ENCODE measurements at regions of chr4 and their contacts with region 1.

Region 1: GRCh38 chr4:146175541-146176453 is at the start of gene LSM6:
- DNase-seq: peak; percentile 91
- ATAC-seq: peak; percentile 94
- H3K4me3 Mint-ChIP-seq: peak within 1 kb of the TSS; percentile 82
- H3K27ac Mint-ChIP-seq: peak within 1 kb of the TSS; percentile 85
- H3K4me1 Mint-ChIP-seq: peaks cover 49% of the 10 kb centered on the region
- H3K27me3 Mint-ChIP-seq: no peaks in the 10 kb centered on the region
- total RNA-seq, gene LSM6: 64.9 to 66.9 TPM

Region 2: GRCh38 chr4:145732895-145733880 is 442.6 kb before region 1 on chr4:
- CTCF ChIA-PET with region 1: no interaction called
- POLR2A ChIA-PET with region 1: no interaction called
- intact Hi-C with region 1: loop called in 1 of 2 experiments (anchors 5 kb)
- DNase-seq: peak; percentile 92
- ATAC-seq: peak; percentile 92
- H3K4me3 Mint-ChIP-seq: peak overlapping the region; percentile 65
- H3K27ac Mint-ChIP-seq: peak overlapping the region; percentile 56
- H3K4me1 Mint-ChIP-seq: peaks cover 23% of the 10 kb centered on the region
- H3K27me3 Mint-ChIP-seq: no peaks in the 10 kb centered on the region

Region 3: DNA sequence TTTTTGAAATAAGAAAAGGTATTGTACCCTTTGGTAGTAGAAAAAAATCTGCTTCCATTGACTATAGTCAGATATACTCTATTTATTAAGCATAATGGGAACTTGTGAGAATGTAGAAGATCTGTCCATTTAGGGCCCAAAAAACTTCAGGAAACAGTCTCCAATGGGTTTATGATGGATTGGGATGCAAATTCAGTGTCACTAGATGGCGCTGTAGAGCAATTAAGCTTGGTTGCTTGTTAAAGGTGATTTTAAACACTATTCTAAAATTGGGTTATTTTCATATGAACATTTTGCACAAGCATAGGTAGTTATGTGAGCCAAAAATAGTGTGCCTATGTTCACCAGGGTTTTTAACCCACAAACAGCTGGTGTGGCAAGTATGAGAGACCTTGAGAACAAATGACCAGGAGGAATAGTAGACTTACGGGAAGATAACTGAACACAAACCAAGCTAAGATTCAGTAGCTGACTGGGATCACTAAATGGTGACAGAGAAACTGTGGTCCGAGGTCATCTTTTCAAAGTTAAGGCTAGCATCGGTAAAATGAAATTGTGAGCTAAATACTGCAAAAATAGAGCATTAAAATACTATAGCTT is 80.6 kb before region 1 on chr4:
- CTCF ChIA-PET with region 1: interaction called, 4 read pairs
- POLR2A ChIA-PET with region 1: no interaction called
- intact Hi-C with region 1: loop called in 1 of 2 experiments (anchors 2 kb)
- DNase-seq: peak; percentile 46
- ATAC-seq: no peak
- H3K4me3 Mint-ChIP-seq: no peak overlapping the region
- H3K27ac Mint-ChIP-seq: no peak overlapping the region
- H3K4me1 Mint-ChIP-seq: no peaks in the 10 kb centered on the region
- H3K27me3 Mint-ChIP-seq: peaks cover 7% of the 10 kb centered on the region

Region 4: GRCh38 chr4:146132445-146132844 is 43.4 kb before region 1 on chr4:
- CTCF ChIA-PET with region 1: no interaction called
- POLR2A ChIA-PET with region 1: no interaction called
- intact Hi-C with region 1: loop called (anchors 1 kb)
- DNase-seq: peak; percentile 81
- ATAC-seq: peak; percentile 99
- H3K4me3 Mint-ChIP-seq: no peak overlapping the region
- H3K27ac Mint-ChIP-seq: no peak overlapping the region
- H3K4me1 Mint-ChIP-seq: peaks cover 13% of the 10 kb centered on the region
- H3K27me3 Mint-ChIP-seq: peaks cover 5% of the 10 kb centered on the region

Region 5: DNA sequence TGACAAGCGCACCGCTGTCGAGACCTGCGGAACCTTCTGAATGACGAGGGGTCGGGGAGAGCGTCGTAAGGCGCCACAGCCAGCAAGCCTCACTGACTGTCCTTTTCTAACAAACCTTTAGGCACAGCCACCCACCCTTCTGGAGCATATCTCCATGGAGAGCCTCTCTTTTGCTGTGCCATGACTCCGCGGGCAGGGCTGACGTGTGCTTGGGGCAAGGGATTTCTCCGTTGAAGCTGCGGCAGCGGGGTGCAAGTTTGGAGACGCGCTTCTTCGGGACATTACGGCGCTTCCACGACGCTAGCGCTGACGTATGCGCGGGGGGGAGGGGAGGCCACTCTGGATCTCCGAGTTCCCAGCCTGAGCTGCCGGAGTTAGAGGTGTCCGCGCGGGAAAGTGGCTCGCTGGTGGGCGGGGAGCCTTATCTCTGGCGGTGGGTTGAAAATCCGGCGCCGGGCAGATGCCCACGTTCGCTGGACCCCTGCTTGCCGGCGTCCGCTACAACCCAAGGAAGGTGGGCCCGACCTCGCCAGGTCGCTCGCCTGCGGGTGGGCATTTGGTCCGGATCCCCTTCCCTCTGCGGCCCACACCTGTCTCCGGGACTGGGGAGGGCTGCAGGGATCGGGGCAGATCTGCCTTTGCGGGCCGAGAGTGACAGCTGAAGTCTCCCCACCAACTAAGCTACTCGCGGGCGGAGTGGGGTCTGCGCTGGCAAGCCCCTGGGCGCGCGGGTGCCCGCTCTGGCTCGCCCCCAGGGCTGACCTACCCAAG is 346.5 kb after region 1 on chr4:
- CTCF ChIA-PET with region 1: no interaction called
- POLR2A ChIA-PET with region 1: no interaction called
- intact Hi-C with region 1: loop called (anchors 1 to 10 kb)
- DNase-seq: peak; percentile 91
- ATAC-seq: peak; percentile 77
- H3K4me3 Mint-ChIP-seq: no peak overlapping the region
- H3K27ac Mint-ChIP-seq: no peak overlapping the region
- H3K4me1 Mint-ChIP-seq: peaks cover 27% of the 10 kb centered on the region
- H3K27me3 Mint-ChIP-seq: no peaks in the 10 kb centered on the region